IMR-90 (cell line): ENCODE measurements at regions of chr9 and their contacts with region 1.

Region 1: GRCh38 chr9:32234451-32234850 is 150.0 kb upstream of the ACO1 start:
- DNase-seq: no peak
- ATAC-seq: no peak
- H3K4me3 ChIP-seq: no peak overlapping the region
- H3K27ac ChIP-seq: no peak overlapping the region
- H3K4me1 ChIP-seq: no peaks in the 10 kb centered on the region
- H3K27me3 ChIP-seq: no peaks in the 10 kb centered on the region
- CTCF ChIP-seq: no peak
- POLR2A ChIP-seq: no peak
- RAD21 ChIP-seq: no peak

Region 2: GRCh38 chr9:31848505-31849285 is 385.8 kb before region 1 on chr9:
- CTCF ChIA-PET with region 1: no interaction called
- POLR2A ChIA-PET with region 1: no interaction called
- dilution Hi-C with region 1: no loop called
- in situ Hi-C with region 1: no loop called
- intact Hi-C with region 1: loop called (anchors 5 kb)
- DNase-seq: no peak
- ATAC-seq: no peak
- H3K4me3 ChIP-seq: no peak overlapping the region
- H3K27ac ChIP-seq: no peak overlapping the region
- H3K4me1 ChIP-seq: no peaks in the 10 kb centered on the region
- H3K27me3 ChIP-seq: no peaks in the 10 kb centered on the region
- CTCF ChIP-seq: no peak
- POLR2A ChIP-seq: no peak
- RAD21 ChIP-seq: no peak